AG04449 (cell line): ENCODE measurements at regions of chr4 and their contacts with region 1.

Region 1: DNA sequence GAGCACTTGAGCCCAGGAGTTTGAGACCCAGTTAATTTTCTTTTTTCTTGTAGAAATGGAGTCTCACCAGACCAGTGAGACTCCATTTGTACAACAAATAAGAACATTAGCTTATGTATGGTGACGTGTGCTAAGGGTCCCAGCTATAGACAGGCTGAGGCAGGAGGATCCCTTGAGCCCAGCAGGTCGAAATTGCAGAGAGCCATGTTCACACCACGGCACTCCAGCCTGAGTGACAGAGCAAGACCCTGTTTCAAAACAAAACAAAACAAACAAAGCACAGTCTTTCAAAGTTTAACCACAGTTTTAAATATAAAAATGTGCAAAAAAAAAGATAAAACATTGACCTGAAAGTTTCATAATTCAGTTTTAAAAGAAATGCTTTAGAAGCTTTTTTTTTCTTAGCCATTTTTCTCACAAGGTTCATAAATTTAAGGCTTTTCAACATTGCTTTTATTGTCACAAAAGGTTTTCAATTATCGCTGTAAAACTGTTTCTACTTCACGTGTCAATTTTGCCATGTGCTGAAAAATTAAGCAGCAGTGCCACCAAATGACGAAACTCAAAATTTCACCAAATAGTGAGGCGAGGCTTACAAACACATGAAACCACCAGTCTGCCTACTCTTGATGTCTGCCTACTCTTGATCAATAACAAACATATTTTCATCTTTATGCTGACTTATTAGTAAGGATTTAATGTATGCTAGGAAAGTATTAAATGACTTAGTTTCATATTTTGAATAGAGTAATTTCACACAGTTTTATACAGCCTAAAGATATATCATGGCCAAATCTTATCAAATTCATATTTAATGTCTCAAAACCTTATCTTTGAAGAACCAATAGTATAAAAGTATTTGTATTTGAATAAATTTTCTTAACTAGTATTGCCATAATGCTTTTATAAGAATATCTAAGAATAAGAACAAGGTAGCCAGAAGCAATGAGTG is 126.3 kb downstream of the NEK1 start:
- DNase-seq: no peak
- H3K4me3 ChIP-seq: no peak overlapping the region
- CTCF ChIP-seq: peak; percentile 41

Region 2: GRCh38 chr4:168995537-168996295 is 490.4 kb before region 1 on chr4:
- CTCF ChIA-PET with region 1: interaction called, 23 read pairs
- POLR2A ChIA-PET with region 1: no interaction called
- DNase-seq: no peak
- H3K4me3 ChIP-seq: no peak overlapping the region
- CTCF ChIP-seq: peak; percentile 20

Region 3: GRCh38 chr4:169010125-169011023 is 475.7 kb before region 1 on chr4 and contains the start of gene CBR4:
- CTCF ChIA-PET with region 1: interaction called, 10 read pairs
- POLR2A ChIA-PET with region 1: interaction called, 7 read pairs
- DNase-seq: peak; percentile 94
- H3K4me3 ChIP-seq: peak within 1 kb of the TSS; percentile 77
- CTCF ChIP-seq: peak; percentile 6

Region 4: DNA sequence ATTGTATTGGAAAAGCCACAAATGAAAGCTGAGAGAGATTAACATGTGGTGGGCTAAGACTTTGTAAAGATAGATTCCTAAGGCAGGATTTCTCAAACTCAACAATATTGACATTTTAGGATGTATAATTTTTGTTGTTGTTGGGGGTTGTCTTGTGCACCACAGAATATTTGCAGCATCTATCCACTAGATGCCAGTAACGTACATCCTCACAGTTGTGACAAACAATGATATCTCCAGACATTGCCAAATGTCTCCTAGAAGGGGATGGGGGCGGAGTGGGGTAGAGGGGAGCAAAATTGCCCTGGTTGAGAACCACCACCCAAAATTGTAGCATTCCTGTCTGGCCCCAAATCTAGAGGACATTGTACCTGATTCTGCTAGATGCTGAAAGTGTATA is 461.3 kb before region 1 on chr4:
- CTCF ChIA-PET with region 1: interaction called, 26 read pairs
- POLR2A ChIA-PET with region 1: no interaction called
- DNase-seq: no peak
- H3K4me3 ChIP-seq: no peak overlapping the region
- CTCF ChIP-seq: peak; percentile 59

Region 5: GRCh38 chr4:169270810-169271691 is 215.0 kb before region 1 on chr4 and contains the start of gene SH3RF1:
- CTCF ChIA-PET with region 1: interaction called, 19 read pairs
- POLR2A ChIA-PET with region 1: interaction called, 6 read pairs
- DNase-seq: no peak
- H3K4me3 ChIP-seq: peak within 1 kb of the TSS; percentile 85
- CTCF ChIP-seq: peak; percentile 50

Region 6: DNA sequence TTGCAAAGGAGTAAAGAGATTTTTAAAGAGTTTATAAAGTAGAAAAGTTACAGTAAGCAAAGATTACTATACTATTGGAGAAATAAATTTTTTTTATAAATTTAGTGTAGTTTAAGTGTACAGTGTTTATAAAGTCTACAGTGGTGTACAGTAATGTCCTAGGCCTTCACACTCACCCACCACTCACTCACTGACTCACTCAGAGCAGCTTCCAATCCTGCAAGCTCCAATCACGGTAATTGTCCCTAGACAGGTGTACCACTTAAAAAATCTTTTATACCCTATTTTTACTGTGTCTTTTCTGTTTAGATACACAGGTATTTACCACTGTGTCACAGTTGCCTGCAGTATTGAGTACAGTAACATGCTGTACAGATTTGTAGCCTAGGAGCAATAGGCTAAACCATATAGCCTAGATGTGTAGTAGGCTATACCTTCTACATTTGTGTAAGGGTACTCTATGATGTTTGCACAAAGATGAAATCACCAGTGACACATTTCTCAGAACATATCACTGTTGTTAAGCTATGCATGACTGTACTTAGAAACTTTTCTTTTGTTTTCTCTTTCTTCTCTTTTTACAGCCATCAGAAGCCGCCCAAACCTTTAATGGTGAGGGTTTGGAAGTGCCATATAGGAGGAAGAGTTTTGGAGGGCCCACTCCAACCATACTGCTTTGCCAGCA is 203.5 kb before region 1 on chr4:
- CTCF ChIA-PET with region 1: interaction called, 10 read pairs
- POLR2A ChIA-PET with region 1: no interaction called
- DNase-seq: no peak
- H3K4me3 ChIP-seq: no peak overlapping the region
- CTCF ChIP-seq: no peak

Region 7: GRCh38 chr4:169530048-169530447 is 44.0 kb after region 1 on chr4:
- CTCF ChIA-PET with region 1: no interaction called
- POLR2A ChIA-PET with region 1: no interaction called
- DNase-seq: no peak
- H3K4me3 ChIP-seq: no peak overlapping the region
- CTCF ChIP-seq: no peak

Region 8: DNA sequence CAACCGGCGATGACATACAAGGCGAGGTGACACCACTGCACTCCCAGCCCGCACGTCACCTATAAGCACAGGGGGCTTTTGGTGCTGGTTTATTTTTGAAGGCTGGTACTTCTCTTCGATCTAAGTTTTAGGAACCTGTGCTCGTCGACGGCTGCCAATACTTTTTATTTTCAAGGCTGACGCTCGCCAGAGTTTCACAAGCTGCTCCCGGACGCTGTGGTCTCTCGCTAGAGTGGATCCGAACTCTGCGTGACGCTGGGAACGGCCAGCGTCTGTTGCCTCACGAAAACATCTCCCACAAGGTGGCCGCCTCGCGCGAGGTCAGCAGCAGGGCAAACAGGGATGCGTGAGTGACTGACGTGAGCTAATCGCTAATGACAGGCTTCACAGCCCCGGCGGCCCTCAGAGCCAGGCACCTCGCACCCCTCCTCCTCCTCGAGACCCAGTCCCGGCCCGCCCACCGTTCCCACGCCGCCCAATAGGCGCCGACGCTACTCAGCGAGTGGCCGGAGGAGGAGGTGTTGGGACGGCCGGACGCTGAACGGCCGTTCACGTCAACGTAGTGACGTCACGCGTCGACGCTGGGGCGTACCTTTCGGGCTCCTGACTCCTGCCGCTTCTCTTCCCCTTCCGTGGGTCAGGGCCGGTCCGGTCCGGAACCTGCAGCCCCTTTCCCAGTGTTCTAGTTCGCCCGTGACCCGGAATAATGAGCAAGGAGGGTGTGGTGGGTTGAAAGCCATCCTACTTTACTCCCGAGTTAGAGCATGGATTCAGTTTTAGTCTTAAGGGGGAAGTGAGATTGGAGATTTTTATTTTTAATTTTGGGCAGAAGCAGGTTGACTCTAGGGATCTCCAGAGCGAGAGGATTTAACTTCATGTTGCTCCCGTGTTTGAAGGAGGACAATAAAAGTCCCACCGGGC is 134.2 kb after region 1 on chr4 and contains the start of gene CLCN3:
- CTCF ChIA-PET with region 1: no interaction called
- POLR2A ChIA-PET with region 1: no interaction called
- DNase-seq: peak; percentile 61
- H3K4me3 ChIP-seq: peak within 1 kb of the TSS; percentile 90
- CTCF ChIP-seq: peak; percentile 22